Tibial artery (tissue), 4 donors: ENCODE measurements at regions of chrX and their contacts with region 1.

Region 1: DNA sequence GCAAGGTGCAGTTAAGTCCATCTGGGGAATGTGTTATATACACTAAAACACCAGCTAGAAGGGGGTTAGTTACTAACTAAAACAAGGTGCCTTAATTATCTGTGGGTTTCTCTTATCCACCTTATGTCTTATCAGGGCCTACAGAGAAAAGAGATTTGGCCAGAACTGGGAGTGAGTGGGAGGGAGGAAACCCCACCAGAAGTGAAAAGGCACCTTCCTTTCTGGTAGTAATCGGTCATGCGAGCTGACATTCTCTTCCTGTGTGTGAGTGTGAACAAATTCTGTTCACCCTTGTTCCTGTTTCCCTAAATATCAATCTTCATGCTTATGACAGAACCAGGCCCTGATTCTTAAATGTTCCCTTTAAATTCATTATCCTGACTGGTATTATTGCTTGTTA is 43.5 kb downstream of the SRPX2 start:
- DNase-seq: no peak
- H3K4me3 ChIP-seq: no peak overlapping the region
- H3K27ac ChIP-seq: no peak overlapping the region
- H3K4me1 ChIP-seq: no peaks in the 10 kb centered on the region
- H3K27me3 ChIP-seq: no peaks in the 10 kb centered on the region
- CTCF ChIP-seq: no peak

Region 2: GRCh38 chrX:100768679-100769338 is 81.3 kb after region 1 on chrX:
- intact Hi-C with region 1: loop called (anchors 2 kb)
- DNase-seq: peak; percentile 77 to 86
- H3K4me3 ChIP-seq: no peak overlapping the region
- H3K27ac ChIP-seq: no peak overlapping the region
- H3K4me1 ChIP-seq: no peaks in the 10 kb centered on the region
- H3K27me3 ChIP-seq: no peaks in the 10 kb centered on the region
- CTCF ChIP-seq: peak; percentile 93 to 95